MCF 10A (cell line): ENCODE measurements at regions of chr22 and their contacts with region 1.

Region 1: GRCh38 chr22:42614312-42615091 is at the start of gene POLDIP3:
- DNase-seq: peak; percentile 97
- H3K4me3 Mint-ChIP-seq: peak within 1 kb of the TSS; percentile 94
- H3K27ac Mint-ChIP-seq: peak within 1 kb of the TSS; percentile 100
- H3K4me1 Mint-ChIP-seq: peaks cover 29% of the 10 kb centered on the region
- H3K27me3 Mint-ChIP-seq: no peaks in the 10 kb centered on the region
- CTCF ChIP-seq: no peak
- total RNA-seq, gene POLDIP3: 49.7 and 51.3 TPM in 2 replicates

Region 2: DNA sequence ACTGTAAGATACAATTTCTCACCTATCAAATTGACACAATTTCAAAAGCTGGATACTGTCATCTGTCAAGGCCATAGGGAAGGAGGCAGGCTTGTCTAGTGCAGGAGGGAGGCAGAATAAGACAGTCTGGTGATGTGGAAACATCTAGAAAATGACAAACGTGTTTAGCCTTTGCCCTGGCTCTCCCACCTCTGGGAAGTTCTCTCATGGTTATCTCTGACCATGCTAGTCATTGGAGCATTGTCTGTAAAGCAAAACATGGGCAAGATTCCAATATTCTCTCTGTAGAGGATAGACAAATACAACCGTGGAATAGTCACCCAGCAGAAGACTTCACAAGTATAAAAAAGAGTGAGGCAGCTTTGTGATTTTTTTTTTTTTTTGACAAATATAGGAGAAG is 69.8 kb before region 1 on chr22:
- CTCF ChIA-PET with region 1: no interaction called
- POLR2A ChIA-PET with region 1: interaction called, 11 read pairs
- intact Hi-C with region 1: no loop called
- DNase-seq: no peak
- H3K4me3 Mint-ChIP-seq: no peak overlapping the region
- H3K27ac Mint-ChIP-seq: no peak overlapping the region
- H3K4me1 Mint-ChIP-seq: no peaks in the 10 kb centered on the region
- H3K27me3 Mint-ChIP-seq: peaks cover 9% of the 10 kb centered on the region
- CTCF ChIP-seq: no peak

Region 3: GRCh38 chr22:42581762-42582716 is 32.5 kb before region 1 on chr22:
- CTCF ChIA-PET with region 1: interaction called, 3 read pairs
- POLR2A ChIA-PET with region 1: interaction called, 13 read pairs
- intact Hi-C with region 1: no loop called
- DNase-seq: peak; percentile 67
- H3K4me3 Mint-ChIP-seq: peak overlapping the region; percentile 91
- H3K27ac Mint-ChIP-seq: peak overlapping the region; percentile 77
- H3K4me1 Mint-ChIP-seq: peaks cover 5% of the 10 kb centered on the region
- H3K27me3 Mint-ChIP-seq: no peaks in the 10 kb centered on the region
- CTCF ChIP-seq: no peak

Region 4: DNA sequence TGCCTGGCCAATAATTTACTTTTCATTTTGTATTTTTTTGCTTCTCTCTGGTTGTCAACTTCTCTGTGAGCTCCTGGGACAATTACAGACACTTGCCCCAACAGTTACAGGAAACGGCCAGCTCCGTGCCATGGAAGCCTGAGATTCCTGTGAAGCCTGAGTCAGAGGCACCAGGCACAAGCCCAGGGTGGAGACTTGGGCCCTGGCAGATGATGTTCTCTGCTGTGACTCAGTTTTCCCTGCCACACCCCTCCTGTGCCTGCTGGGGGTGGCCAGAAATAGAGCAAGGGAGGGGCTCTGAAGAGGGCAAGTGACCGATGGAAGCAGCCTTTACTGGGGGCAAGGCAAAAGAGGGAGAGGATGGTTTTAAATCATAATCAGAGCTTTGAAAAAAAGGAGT is 21.0 kb after region 1 on chr22:
- CTCF ChIA-PET with region 1: interaction called, 3 read pairs
- POLR2A ChIA-PET with region 1: interaction called, 28 read pairs
- intact Hi-C with region 1: no loop called
- DNase-seq: peak; percentile 94
- H3K4me3 Mint-ChIP-seq: peak overlapping the region; percentile 54
- H3K27ac Mint-ChIP-seq: peak overlapping the region; percentile 99
- H3K4me1 Mint-ChIP-seq: peaks cover 9% of the 10 kb centered on the region
- H3K27me3 Mint-ChIP-seq: no peaks in the 10 kb centered on the region
- CTCF ChIP-seq: no peak

Region 5: DNA sequence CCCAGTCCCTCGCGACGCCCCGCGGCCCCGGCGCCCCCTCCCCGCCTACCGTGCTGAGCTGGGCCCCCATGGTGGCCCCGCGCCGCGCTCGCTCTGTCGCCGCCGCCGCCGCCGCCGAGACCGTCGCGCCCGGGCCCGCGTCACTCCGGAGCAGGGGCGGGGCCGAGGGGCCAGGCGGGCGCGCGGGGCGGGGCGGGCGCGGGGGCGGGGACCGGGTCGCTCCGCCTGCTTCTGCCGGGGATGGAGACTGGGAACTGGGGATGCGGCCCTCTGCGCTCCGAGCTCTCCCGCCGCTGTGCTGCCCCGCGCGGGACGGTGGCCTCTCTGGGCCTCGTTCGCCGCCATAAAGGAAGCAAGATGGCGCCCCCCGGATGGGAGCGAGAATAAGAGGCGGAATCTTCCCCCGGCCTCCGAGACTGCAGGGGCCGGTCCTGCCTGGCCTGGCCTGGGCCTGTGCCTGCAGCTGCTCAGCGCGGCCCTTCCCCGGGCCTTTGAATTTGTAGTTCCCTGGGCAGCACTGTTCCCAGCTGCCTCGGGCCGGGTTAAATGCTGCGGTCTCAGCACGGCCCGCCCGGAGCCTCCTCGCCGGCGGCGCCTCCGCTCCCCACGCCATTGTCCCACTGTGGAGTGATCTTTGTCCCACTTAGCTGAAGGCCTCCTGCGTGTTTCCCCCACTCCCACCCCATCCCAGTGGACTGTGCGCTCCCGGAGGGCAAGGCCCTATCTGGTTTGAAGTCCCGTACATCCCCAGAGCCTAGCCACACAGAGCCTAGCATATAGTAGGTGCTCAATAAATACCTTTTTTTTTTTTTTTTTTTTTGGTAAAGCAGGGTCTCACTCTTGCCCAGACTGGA is 35.0 kb after region 1 on chr22 and contains the start of gene CYB5R3:
- CTCF ChIA-PET with region 1: no interaction called
- POLR2A ChIA-PET with region 1: interaction called, 37 read pairs
- intact Hi-C with region 1: no loop called
- DNase-seq: peak; percentile 79
- H3K4me3 Mint-ChIP-seq: peak within 1 kb of the TSS; percentile 100
- H3K27ac Mint-ChIP-seq: peak within 1 kb of the TSS; percentile 93
- H3K4me1 Mint-ChIP-seq: peaks cover 24% of the 10 kb centered on the region
- H3K27me3 Mint-ChIP-seq: no peaks in the 10 kb centered on the region
- CTCF ChIP-seq: no peak
- total RNA-seq, gene CYB5R3: 104 and 114 TPM in 2 replicates

Region 6: GRCh38 chr22:42754658-42755057 is 140.2 kb after region 1 on chr22:
- CTCF ChIA-PET with region 1: no interaction called
- POLR2A ChIA-PET with region 1: interaction called, 12 read pairs
- intact Hi-C with region 1: no loop called
- DNase-seq: peak; percentile 85
- H3K4me3 Mint-ChIP-seq: no peak overlapping the region
- H3K27ac Mint-ChIP-seq: peak overlapping the region; percentile 59
- H3K4me1 Mint-ChIP-seq: peaks cover 21% of the 10 kb centered on the region
- H3K27me3 Mint-ChIP-seq: no peaks in the 10 kb centered on the region
- CTCF ChIP-seq: no peak

Region 7: DNA sequence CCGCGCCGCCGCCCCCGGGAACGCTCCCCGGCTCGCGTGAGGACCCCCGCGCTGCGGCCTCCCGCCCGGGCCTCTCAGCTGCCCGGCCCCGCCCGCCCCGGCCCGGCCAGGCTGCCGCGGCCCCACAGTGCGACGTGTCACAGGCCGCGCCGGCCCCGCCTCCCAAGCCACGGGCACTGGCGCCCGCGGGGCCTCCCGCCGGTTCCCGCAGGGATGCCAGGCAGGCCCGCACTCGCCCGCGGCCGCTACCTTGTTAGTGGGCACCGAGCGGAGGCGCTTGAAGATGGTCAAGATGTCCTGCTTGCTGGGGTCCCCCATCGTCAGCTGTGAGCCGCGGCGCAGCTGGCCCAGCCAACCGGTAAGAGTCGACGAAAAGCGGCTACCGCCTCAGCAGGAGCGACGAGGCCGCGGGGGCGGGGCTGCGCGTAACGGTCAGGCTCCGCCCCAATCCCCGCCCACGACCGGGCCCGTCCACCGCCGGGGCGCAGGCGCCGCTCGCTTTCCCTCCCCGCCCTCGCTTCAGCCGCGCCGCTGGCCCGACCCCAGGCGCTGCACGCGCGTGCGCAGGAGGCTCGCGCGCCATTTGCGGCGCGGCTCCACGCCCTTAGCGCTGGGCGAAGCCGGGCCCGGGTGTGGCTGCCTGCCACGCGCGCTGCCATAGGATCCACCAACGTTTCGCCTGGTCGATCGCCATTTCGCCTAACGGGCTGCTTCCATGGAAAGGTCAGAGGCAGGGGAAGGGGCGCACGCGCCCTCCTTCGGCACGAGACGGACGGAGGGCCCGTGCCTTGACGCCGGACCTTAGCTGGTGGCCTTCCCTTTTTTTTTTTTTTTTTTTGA is 242.6 kb after region 1 on chr22 and contains the start of gene ARFGAP3:
- CTCF ChIA-PET with region 1: no interaction called
- POLR2A ChIA-PET with region 1: interaction called, 13 read pairs
- intact Hi-C with region 1: no loop called
- DNase-seq: peak; percentile 86
- H3K4me3 Mint-ChIP-seq: peak within 1 kb of the TSS; percentile 87
- H3K27ac Mint-ChIP-seq: peak within 1 kb of the TSS; percentile 71
- H3K4me1 Mint-ChIP-seq: no peaks in the 10 kb centered on the region
- H3K27me3 Mint-ChIP-seq: no peaks in the 10 kb centered on the region
- CTCF ChIP-seq: no peak
- total RNA-seq, gene ARFGAP3: 67.1 and 82.9 TPM in 2 replicates